Posterior cingulate gyrus (tissue), 11 donors: ENCODE measurements at regions of chr15 and their contacts with region 1.

Region 1: GRCh38 chr15:100627789-100628395 is 25.5 kb downstream of the ASB7 start:
- DNase-seq: peak in 8 of 10 donors; percentile 24 to 82 (median 70)

Region 2: GRCh38 chr15:100642213-100642949 is 14.5 kb after region 1 on chr15:
- intact Hi-C with region 1: no loop called
- DNase-seq: no peak

Region 3: GRCh38 chr15:100873029-100873677 is 245.3 kb after region 1 on chr15:
- intact Hi-C with region 1: loop called (anchors 2 kb)
- DNase-seq: peak in 6 of 10 donors; percentile 46 to 77 (median 67)

Region 4: DNA sequence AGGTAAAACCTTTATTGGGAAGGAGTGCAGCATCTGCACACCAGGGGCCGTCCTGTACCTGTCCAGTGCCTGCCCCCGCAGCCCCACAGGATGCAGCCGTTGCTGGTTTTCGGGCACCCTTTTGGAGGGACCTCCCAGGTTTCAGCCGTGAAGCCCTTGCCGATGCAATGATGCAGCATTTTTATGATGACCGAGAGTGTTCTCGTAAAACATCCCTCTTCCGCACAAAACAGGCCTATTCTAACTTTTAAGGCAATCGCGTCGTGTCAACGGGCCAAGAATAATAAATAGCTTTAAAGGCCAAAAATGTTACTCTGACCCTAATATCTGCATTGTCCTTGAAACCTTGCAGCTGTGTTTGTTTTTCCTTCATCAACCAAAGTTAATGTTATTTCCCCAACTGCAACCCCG is 417.3 kb after region 1 on chr15:
- intact Hi-C with region 1: no loop called
- DNase-seq: peak in 3 of 10 donors; percentile 8 to 29 (median 28)

Region 5: DNA sequence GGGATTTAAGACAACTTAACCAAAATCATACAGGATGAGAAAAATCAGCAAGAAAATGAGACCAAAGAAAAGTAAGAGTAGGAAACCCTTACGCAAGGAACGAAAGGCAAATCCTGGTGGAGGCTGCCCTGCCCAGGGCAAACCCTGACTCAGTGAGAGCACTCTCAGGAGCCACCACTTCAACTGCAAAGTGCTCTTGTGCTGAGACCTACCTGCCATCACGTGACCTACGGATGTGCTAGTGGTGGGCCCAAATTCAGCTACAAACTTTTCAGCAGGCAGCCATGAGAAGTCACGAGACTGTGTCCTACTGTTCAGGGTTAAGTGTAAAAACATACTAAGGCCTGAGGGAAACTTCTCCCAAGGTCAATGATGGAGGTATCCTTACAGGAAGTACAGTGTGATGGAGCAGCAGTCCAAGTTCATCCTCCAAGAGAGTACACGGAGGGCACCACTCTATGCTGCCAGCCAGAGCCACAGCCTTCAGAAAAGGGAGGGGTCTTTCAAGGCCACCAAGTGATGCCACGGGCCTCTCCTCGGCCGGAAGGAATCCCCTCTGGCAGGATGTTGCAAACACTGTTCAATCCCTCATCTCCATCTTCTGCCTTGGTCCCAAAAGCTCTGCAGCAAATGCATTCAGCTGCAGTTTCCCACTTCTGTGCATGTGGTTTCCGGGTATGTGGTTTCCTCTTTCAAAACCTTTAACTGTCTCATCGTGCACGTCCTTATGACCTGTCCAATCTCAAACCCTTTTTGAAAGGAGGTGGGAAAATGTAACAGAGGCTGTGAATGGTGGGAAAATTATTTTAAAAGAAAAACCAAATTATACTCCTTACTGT is 614.5 kb after region 1 on chr15:
- intact Hi-C with region 1: loop called (anchors 10 kb)
- DNase-seq: no peak